ENCODE measurements at regions of chr16 and their contacts with region 1.

Region 1: GRCh38 chr16:10181196-10182162 is 749 bp downstream of the GRIN2A start:
- DNase-seq: peak; percentile 69 to 92 (median 74)
- H3K4me3 ChIP-seq: peak overlapping the region; percentile 37 to 81 (median 65)
- H3K27ac ChIP-seq: peak overlapping the region in 58 of 59 donors; percentile 6 to 93 (median 84)
- H3K27me3 ChIP-seq: peaks cover 0 to 45% (median 9%) of the 10 kb centered on the region in 45 donors
- CTCF ChIP-seq: peak; percentile 65 to 99 (median 93)

Region 2: GRCh38 chr16:9258423-9259051 is 922.9 kb before region 1 on chr16:
- intact Hi-C with region 1: loop called (anchors 2 to 5 kb)
- DNase-seq: peak; percentile 41 to 79 (median 70)
- H3K4me3 ChIP-seq: no peak overlapping the region
- H3K27ac ChIP-seq: peak overlapping the region in 45 of 59 donors; percentile 4 to 85 (median 59)
- H3K27me3 ChIP-seq: no peaks in the 10 kb centered on the region
- CTCF ChIP-seq: peak; percentile 58 to 89 (median 78)

Region 3: DNA sequence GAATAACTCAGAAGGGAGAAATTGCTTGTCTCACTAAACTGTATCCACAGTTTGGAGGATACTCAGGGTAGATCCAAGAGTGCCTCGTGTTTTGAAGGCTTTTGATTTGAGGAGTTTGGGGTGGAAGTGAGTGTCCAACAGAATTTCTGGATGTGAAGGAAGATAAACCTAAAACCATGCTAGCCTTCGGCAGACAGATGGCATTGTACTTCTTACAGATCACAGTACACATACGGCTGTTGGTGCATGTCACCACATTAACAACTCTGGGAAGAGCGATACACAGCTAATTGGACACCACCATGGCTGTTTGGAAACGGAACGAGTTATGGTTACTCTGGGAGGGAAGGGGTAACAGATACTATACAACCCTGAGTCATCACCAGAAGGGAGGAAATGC is 419.6 kb before region 1 on chr16:
- intact Hi-C with region 1: loop called (anchors 5 kb)
- DNase-seq: peak in 2 of 10 donors; percentile 11 to 50
- H3K4me3 ChIP-seq: peak overlapping the region in 2 of 59 donors; percentile 24 to 25
- H3K27ac ChIP-seq: peak overlapping the region in 9 of 59 donors; percentile 2 to 48 (median 27)
- H3K27me3 ChIP-seq: no peaks in the 10 kb centered on the region
- CTCF ChIP-seq: peak in 51 of 56 donors; percentile 18 to 74 (median 49)

Region 4: GRCh38 chr16:9813665-9814064 is 367.8 kb before region 1 on chr16:
- intact Hi-C with region 1: no loop called
- DNase-seq: no peak
- H3K4me3 ChIP-seq: no peak overlapping the region
- H3K27ac ChIP-seq: no peak overlapping the region
- H3K27me3 ChIP-seq: no peaks in the 10 kb centered on the region
- CTCF ChIP-seq: no peak

Region 5: GRCh38 chr16:10039220-10040096 is 142.0 kb before region 1 on chr16:
- intact Hi-C with region 1: loop called in 1 of 2 experiments (anchors 2 kb)
- DNase-seq: peak; percentile 55 to 79 (median 68)
- H3K4me3 ChIP-seq: peak overlapping the region; percentile 24 to 71 (median 50)
- H3K27ac ChIP-seq: peak overlapping the region in 58 of 59 donors; percentile 10 to 97 (median 85)
- H3K27me3 ChIP-seq: no peaks in the 10 kb centered on the region
- CTCF ChIP-seq: peak in 53 of 56 donors; percentile 16 to 72 (median 52)

Region 6: DNA sequence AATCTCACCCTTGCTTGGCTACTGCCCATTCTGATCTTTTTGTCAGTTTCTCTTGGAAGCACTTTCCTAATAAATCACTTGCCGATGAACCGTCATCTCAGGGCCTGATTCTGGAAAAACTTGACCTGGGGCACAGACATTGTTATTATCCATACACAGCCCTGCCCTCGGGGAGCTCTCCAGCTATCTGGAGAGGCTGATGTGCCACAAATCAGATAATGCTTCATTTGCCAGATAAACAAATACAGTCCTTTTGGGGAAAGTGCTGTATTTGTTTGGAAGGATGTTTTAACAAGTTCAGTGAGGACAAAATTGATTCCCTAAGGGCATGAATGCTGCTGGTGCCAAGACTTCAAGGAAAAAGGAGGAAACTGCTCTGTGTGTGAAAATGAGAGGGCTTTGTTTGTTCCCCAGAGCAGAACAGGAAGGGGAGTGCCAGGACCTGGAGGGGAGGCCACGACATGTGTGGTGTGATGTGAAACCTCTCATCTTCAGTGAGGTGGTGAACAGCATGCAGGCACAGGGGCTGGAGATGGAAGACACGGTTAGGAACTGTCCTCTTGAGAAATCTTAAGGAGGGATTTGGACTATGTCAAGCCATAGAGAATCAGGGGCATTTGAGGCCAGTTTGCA is 47.2 kb after region 1 on chr16:
- intact Hi-C with region 1: no loop called
- DNase-seq: no peak
- H3K4me3 ChIP-seq: no peak overlapping the region
- H3K27ac ChIP-seq: no peak overlapping the region
- H3K27me3 ChIP-seq: peaks cover 0 to 30% (median 0%) of the 10 kb centered on the region in 45 donors
- CTCF ChIP-seq: no peak

Measured in dorsolateral prefrontal cortex (tissue), 120 donors.